Posterior vena cava (tissue), 2 donors: ENCODE measurements at regions of chr2 and their contacts with region 1.

Region 1: DNA sequence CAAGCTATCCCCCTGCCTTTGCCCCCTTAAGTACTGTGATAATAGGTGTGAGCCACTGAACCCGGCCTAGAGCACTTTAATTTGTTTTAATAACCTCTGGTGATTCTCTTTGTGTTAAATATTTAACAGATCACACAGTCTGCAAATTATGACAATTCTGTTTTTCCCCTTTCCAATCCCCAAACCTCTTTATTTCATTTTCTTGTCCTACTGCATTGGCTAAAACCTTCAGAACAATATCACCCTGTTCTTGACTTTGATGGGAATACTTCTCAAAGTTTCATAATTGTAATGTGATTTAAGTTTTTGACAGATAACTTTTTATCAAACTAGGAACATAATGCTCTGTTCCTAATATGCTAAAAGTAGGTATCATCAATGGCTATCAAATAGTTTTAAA is 44.5 kb downstream of the USP37 start:
- DNase-seq: no peak

Region 2: GRCh38 chr2:218152765-218153164 is 370.9 kb before region 1 on chr2:
- intact Hi-C with region 1: no loop called
- DNase-seq: no peak

Region 3: GRCh38 chr2:218557941-218558340 is 34.3 kb after region 1 on chr2:
- intact Hi-C with region 1: loop called in 1 of 2 experiments (anchors 1 kb)
- DNase-seq: no peak

Region 4: GRCh38 chr2:219199470-219200211 is 676.0 kb after region 1 on chr2:
- intact Hi-C with region 1: no loop called
- DNase-seq: no peak